Cardiac septum (tissue), 1 donor: ENCODE measurements at regions of chr6 and their contacts with region 1.

Region 1: DNA sequence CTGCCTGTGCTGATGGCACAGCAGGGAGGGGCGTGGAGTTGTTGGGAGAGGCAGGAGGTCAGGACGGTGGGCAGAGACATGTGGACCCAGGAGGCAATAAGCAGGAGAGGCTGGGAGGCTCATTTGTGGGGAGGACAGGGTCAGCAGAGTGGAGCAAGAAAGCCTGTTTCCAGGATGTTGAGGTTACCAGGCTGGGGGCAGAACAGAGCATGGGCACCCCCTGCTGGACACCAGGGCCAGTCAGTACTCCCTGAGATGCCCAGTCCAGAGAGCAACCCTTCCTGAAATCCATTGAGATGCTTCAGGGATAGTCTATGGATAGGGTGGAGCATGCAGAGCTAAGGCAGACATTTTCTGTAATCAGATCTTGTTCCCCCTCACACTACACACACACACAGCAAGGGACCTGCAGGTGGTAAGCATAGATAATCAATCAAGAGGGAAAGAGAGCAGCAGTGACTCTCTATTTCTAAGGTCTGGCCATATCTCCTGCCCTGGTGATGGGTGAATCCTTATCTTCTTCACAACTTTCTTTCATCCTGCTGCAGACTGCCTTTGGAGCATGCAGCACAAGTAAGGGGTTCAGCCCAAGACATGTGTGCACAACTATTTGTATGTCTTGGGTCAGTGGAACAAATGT is 41.7 kb downstream of the MOCS1 start:
- DNase-seq: peak; percentile 81

Region 2: GRCh38 chr6:39377539-39377950 is 515.1 kb before region 1 on chr6:
- intact Hi-C with region 1: loop called (anchors 5 kb)
- DNase-seq: no peak

Region 3: GRCh38 chr6:39812853-39813533 is 79.6 kb before region 1 on chr6:
- intact Hi-C with region 1: no loop called
- DNase-seq: no peak

Region 4: DNA sequence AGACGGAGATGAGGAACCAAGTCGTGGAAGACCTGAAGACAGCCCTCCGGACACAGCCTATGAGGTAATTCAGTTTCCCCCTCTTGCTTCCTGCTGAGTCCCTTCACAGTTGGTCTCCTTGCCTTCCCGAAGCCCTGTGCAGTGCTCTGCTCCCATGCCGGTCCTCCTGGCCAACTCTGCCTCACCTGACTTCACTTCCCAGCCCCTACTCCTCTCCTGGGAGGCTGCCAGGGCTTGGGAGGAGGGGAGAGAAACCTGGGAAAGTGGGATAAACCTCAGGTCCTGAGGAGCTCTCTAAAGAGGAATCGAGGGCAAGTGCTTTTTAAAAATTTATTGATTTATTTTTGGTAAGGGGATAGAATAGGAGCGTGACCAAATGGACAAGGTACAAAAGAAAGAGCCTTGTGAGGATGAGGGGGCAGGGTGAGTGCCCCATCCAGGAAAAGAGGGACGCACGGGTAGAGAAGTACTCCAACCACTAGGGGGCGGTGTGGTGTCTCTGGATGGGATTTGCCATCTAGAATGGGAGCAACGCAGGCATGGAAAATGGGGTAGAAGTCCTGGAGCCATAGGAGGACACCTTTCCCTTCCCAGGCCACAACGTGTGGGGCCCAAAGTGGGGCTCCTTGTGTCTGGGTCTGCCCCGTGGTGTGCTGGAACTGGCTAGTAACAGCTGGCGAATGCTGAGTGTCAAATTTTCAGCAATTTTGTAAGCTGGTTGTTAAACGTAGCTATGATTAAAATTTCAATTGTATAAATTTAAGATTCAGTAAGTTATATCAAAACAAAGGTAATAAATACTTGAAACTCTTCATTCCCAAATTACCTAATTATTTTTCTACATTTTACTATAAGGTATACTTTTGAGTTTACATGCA is 27.4 kb before region 1 on chr6:
- intact Hi-C with region 1: loop called (anchors 2 kb)
- DNase-seq: peak; percentile 85